CD8-positive, alpha-beta T cell (primary cell): ENCODE measurements at regions of chr7 and their contacts with region 1.

Region 1: GRCh38 chr7:92447345-92448204 is at the start of gene GATAD1:
- DNase-seq: peak; percentile 55 to 91 (median 79)
- ATAC-seq: peak; percentile 78
- H3K4me3 ChIP-seq: peak within 1 kb of the TSS; percentile 73 to 79
- H3K4me3 Mint-ChIP-seq: peak within 1 kb of the TSS; percentile 91
- H3K27ac ChIP-seq: peak within 1 kb of the TSS; percentile 92 to 97
- H3K27ac Mint-ChIP-seq: peak within 1 kb of the TSS; percentile 99
- H3K4me1 ChIP-seq: peaks cover 17% of the 10 kb centered on the region
- H3K4me1 Mint-ChIP-seq: peaks cover 16% of the 10 kb centered on the region
- H3K27me3 ChIP-seq: no peaks in the 10 kb centered on the region
- H3K27me3 Mint-ChIP-seq: no peaks in the 10 kb centered on the region
- CTCF ChIP-seq: peak; percentile 90
- total RNA-seq, gene GATAD1: 10.3 to 10.5 TPM

Region 2: DNA sequence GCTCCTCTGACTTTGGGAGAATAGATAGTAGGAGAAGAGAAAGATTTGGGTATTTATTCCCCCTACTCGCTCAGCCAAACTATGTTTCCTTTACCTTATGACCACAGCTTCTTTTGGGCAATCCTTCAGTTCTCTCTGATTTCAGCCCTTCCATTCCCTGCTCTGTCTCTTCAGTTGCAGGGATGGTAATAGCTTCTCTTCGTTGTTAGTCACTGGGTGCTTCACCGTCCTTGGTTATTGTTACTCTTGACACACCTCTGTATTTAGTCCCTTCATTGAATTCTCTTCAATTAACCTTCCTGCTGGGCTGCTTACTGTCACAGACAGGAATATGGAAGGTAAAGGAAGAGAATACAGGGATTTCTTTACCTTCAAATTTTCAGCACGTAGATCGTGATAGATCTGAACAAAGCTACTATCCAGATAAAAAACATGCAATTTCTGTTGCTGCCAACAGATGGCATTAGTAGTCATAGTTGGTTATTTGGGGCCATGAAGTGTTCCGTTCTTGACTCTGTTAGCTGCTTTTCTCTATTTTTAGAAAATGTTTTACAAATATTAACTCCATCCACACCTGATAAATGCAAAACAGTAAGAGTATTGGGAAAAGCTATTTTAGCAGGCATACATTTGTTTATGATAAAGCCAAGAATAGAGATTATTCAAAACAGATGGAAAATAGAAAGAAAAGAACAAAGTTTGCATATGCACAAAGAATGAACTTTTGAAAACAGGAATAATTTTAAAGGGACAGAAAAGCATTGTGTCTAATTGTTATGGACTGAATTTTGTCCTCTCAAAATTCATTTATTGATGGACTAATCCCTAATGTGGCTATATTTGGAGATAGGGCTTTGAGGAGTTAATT is 1992.2 kb before region 1 on chr7:
- CTCF ChIA-PET with region 1: no interaction called
- POLR2A ChIA-PET with region 1: no interaction called
- intact Hi-C with region 1: loop called (anchors 2 to 5 kb)
- DNase-seq: peak in 2 of 9 experiments; percentile 41 to 56
- ATAC-seq: peak; percentile 59
- H3K4me3 ChIP-seq: no peak overlapping the region
- H3K4me3 Mint-ChIP-seq: peak overlapping the region; percentile 55
- H3K27ac ChIP-seq: no peak overlapping the region
- H3K27ac Mint-ChIP-seq: no peak overlapping the region
- H3K4me1 ChIP-seq: no peaks in the 10 kb centered on the region
- H3K4me1 Mint-ChIP-seq: peaks cover 7% of the 10 kb centered on the region
- H3K27me3 ChIP-seq: no peaks in the 10 kb centered on the region
- H3K27me3 Mint-ChIP-seq: peaks cover 8% of the 10 kb centered on the region
- CTCF ChIP-seq: peak; percentile 76

Region 3: DNA sequence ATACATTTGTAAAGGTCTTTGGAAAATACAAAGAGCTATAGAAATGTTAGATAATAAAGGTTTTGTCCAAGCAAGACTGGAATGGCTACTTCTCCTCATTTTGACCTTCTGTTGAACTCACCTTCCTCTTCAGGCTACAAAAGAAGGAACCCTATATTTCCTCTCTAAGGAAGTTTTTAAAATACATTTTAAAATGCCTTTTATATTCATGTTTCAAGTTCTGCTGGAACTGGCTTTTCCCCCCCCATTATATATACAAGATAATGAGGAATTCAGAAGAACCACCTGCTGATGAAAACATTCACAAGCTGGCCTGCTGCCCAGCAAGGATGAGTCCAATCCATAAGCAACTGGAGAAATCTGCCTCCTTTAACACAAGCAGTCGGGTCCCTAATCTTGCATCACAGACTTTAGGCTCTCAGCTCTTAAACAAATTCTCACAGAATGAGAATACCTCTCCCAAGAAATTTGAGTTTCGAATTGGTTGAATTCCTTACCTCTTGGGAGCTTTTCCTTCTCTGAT is 611.7 kb before region 1 on chr7:
- CTCF ChIA-PET with region 1: interaction called, 12 read pairs
- POLR2A ChIA-PET with region 1: no interaction called
- intact Hi-C with region 1: loop called in 1 of 2 experiments (anchors 2 kb)
- DNase-seq: no peak
- ATAC-seq: no peak
- H3K4me3 ChIP-seq: no peak overlapping the region
- H3K4me3 Mint-ChIP-seq: no peak overlapping the region
- H3K27ac ChIP-seq: no peak overlapping the region
- H3K27ac Mint-ChIP-seq: no peak overlapping the region
- H3K4me1 ChIP-seq: no peaks in the 10 kb centered on the region
- H3K4me1 Mint-ChIP-seq: no peaks in the 10 kb centered on the region
- H3K27me3 ChIP-seq: no peaks in the 10 kb centered on the region
- H3K27me3 Mint-ChIP-seq: no peaks in the 10 kb centered on the region
- CTCF ChIP-seq: no peak

Region 4: DNA sequence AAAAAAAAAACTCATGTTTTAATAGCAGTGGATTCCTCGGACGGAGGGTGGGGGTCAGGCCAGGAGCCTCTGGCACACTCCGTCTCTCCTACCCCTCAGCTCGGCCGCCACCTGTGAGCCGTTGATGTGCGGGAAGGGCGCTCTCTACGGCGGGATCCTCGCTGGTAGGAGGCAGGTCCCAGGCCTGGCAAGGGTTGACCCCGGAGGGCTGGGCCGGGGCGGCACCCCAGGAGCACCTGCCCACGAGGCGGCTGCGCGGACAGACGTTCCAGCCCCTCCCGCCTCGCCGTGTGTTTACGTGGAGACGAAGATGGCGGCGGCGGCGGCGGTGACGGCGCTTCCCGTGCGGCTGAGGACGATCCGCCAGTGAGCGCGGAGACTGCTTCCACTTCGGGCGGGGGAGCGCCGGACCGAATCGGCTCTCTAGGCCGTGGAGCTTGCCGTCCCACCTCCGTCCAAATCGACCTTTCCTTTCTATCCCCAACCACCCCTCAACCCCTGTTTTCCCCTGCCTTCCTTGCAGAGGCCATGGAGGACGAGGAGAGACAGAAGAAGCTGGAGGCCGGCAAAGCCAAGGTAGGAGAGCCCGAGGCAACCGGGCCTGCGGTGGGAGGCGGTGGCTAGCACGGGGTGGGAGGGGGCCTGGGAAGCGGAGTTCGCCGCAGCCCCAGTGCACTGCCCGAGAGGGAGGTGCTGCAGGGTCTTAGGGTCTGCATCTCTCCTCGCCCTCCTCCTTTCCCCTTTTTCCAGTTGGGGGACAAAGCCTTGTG is 506.8 kb before region 1 on chr7 and contains the start of gene AKAP9:
- CTCF ChIA-PET with region 1: interaction called, 5 read pairs
- POLR2A ChIA-PET with region 1: interaction called, 12 read pairs
- intact Hi-C with region 1: loop called in 1 of 2 experiments (anchors 2 kb)
- DNase-seq: peak; percentile 71 to 93 (median 89)
- ATAC-seq: peak; percentile 84
- H3K4me3 ChIP-seq: peak within 1 kb of the TSS; percentile 78 to 92
- H3K4me3 Mint-ChIP-seq: peak within 1 kb of the TSS; percentile 93
- H3K27ac ChIP-seq: peak within 1 kb of the TSS; percentile 91 to 93
- H3K27ac Mint-ChIP-seq: peak within 1 kb of the TSS; percentile 96
- H3K4me1 ChIP-seq: peaks cover 21% of the 10 kb centered on the region
- H3K4me1 Mint-ChIP-seq: peaks cover 45% of the 10 kb centered on the region
- H3K27me3 ChIP-seq: no peaks in the 10 kb centered on the region
- H3K27me3 Mint-ChIP-seq: no peaks in the 10 kb centered on the region
- CTCF ChIP-seq: no peak
- total RNA-seq, gene AKAP9: 61.2 to 61.3 TPM

Region 5: DNA sequence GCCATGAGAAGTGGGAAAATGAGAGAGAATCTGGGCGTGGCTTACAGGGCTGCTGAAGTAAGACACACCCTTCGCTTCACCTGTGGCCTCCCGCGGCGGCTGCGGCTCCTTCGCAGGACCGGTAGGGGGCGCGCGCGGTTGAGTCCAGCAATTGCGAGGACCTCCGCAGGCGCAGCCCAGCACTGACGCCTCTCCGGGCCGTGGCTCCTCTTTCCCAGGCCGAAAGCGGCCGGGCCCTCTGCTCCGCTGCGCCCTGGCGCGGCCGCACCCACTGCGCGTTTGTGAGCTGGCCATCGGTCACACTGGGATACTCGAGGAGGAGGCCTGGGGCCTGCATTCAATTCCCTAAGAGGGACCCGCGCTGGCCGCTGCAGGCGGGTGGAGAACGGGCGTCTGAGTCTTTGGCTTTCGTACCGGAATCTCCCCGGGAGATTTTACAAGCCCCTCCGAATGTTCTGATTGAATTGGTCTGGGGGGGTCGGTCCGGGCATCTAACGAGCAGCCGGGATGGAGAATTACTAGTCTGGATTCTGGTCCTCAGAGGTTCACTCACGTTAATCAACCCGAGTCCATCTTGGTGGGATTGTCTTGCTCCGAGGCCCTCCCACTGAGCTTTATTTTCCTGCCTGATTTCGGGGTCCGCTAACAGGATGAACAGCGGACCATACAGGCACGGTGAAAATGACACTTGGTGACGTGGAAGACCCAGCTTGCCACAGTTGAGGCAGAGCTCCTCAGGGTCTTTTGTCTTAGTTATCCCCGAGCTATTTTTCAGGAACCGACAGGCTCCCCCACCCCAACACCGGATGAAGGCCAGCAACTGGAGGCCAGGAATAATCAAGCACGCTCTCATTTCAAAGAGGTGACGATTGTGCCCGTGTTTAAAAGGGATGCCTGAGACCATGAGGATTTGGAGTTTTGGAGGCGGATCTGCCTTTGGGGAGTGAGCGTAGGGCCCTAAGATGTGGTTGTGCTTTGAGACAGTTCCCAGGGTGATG is 268.3 kb before region 1 on chr7 and contains the start of gene LRRD1:
- CTCF ChIA-PET with region 1: interaction called, 12 read pairs
- POLR2A ChIA-PET with region 1: interaction called, 5 read pairs
- intact Hi-C with region 1: loop called (anchors 1 to 5 kb)
- DNase-seq: peak; percentile 81 to 95 (median 87)
- ATAC-seq: peak; percentile 100
- H3K4me3 ChIP-seq: peak within 1 kb of the TSS; percentile 58 to 64
- H3K4me3 Mint-ChIP-seq: peak within 1 kb of the TSS; percentile 82
- H3K27ac ChIP-seq: peak within 1 kb of the TSS in 1 of 2 experiments; percentile 24
- H3K27ac Mint-ChIP-seq: no peak within 1 kb of the TSS
- H3K4me1 ChIP-seq: peaks cover 3% of the 10 kb centered on the region
- H3K4me1 Mint-ChIP-seq: peaks cover 5% of the 10 kb centered on the region
- H3K27me3 ChIP-seq: no peaks in the 10 kb centered on the region
- H3K27me3 Mint-ChIP-seq: peaks cover 5% of the 10 kb centered on the region
- CTCF ChIP-seq: peak; percentile 97
- total RNA-seq, gene LRRD1: not detected

Region 6: DNA sequence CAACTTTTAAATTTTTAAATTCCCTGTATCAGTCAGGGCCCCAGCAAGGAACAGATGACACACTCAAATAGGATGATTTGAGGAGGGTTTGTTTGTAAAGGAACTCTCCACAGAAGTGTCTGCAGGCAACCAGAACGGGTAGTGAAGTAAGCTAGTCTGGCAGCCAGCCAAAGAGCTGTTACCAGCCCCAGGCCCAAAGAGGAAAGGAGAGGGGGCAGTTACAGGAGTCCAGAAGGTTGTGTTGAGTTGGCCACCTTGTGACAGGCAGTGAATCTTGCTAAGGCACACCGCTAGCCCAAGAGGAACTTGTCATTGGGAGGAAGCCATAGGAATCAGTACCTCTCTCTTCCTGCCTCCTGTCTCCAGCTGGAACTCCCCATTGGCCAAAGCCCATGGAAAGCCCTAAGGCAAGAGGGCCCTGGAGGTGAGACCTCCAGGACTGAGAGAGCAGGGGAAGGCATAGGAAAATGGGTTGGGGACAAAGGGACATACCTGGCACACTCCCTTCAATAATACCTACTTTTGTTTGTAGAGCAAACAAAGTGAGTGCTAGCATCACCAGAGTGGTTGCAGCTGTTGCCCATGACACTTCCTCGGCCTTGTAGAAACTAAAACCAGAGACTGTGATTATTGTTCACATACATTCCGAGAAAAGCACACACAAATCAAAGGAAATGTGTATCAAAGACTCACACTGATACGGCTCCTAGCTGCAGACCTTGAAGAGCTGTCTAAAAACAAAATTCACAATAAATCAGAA is 25.7 kb before region 1 on chr7:
- CTCF ChIA-PET with region 1: interaction called, 94 read pairs
- POLR2A ChIA-PET with region 1: interaction called, 16 read pairs
- intact Hi-C with region 1: loop called (anchors 1 kb)
- DNase-seq: no peak
- ATAC-seq: no peak
- H3K4me3 ChIP-seq: no peak overlapping the region
- H3K4me3 Mint-ChIP-seq: no peak overlapping the region
- H3K27ac ChIP-seq: no peak overlapping the region
- H3K27ac Mint-ChIP-seq: no peak overlapping the region
- H3K4me1 ChIP-seq: no peaks in the 10 kb centered on the region
- H3K4me1 Mint-ChIP-seq: peaks cover 9% of the 10 kb centered on the region
- H3K27me3 ChIP-seq: peaks cover 0 to 10% of the 10 kb centered on the region in 2 experiments
- H3K27me3 Mint-ChIP-seq: peaks cover 19% of the 10 kb centered on the region
- CTCF ChIP-seq: no peak

Region 7: GRCh38 chr7:92528188-92528957 is 80.8 kb after region 1 on chr7 and contains the starts of genes PEX1 and RBM48:
- CTCF ChIA-PET with region 1: interaction called, 7 read pairs
- POLR2A ChIA-PET with region 1: interaction called, 22 read pairs
- intact Hi-C with region 1: loop called (anchors 1 to 5 kb)
- DNase-seq: peak; percentile 90 to 99 (median 94)
- ATAC-seq: peak; percentile 89
- H3K4me3 ChIP-seq: peak within 1 kb of the TSS; percentile 94 to 95
- H3K4me3 Mint-ChIP-seq: peak within 1 kb of the TSS; percentile 91
- H3K27ac ChIP-seq: peak within 1 kb of the TSS; percentile 91 to 98
- H3K27ac Mint-ChIP-seq: peak within 1 kb of the TSS; percentile 98
- H3K4me1 ChIP-seq: peaks cover 22% of the 10 kb centered on the region
- H3K4me1 Mint-ChIP-seq: peaks cover 51% of the 10 kb centered on the region
- H3K27me3 ChIP-seq: no peaks in the 10 kb centered on the region
- H3K27me3 Mint-ChIP-seq: no peaks in the 10 kb centered on the region
- CTCF ChIP-seq: no peak
- total RNA-seq, gene PEX1: 17.8 to 18.1 TPM
- total RNA-seq, gene RBM48: 52.7 to 54.6 TPM